ENCODE measurements at regions of chr4 and their contacts with region 1.

Region 1: GRCh38 chr4:10530137-10530786 is 73.0 kb upstream of the ZNF518B start:
- DNase-seq: no peak
- H3K4me3 ChIP-seq: no peak overlapping the region
- H3K27ac ChIP-seq: no peak overlapping the region
- H3K4me1 ChIP-seq: no peaks in the 10 kb centered on the region
- H3K27me3 ChIP-seq: no peaks in the 10 kb centered on the region; the same call in 1 of the 2 replicates

Region 2: DNA sequence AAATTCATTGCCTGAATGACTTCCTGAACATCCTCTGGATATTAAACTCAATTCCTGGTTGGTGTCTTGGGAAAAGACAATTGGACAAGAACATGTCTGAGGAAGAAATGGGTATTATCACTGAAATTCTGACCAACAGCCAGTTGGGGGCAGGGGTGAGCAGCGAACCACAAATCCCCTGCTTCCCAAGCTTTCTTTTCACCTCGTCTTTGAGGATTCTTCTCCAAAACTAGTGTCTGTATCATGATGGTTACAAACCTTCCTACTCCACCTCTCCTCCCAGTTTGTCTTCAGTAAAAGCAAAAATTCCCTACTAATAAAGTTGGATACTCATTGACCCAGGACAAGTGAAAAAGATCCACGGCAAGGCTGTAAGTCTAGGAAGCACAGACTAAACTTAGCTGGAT is 365.4 kb before region 1 on chr4:
- in situ Hi-C with region 1: loop called (anchors 10 kb)
- DNase-seq: peak; percentile 74
- H3K4me3 ChIP-seq: no peak overlapping the region
- H3K27ac ChIP-seq: no peak overlapping the region
- H3K4me1 ChIP-seq: 0 out of 2 replicates have a peak, but pooled peaks cover 8% of the 10 kb centered on the region
- H3K27me3 ChIP-seq: no peaks in the 10 kb centered on the region

Region 3: DNA sequence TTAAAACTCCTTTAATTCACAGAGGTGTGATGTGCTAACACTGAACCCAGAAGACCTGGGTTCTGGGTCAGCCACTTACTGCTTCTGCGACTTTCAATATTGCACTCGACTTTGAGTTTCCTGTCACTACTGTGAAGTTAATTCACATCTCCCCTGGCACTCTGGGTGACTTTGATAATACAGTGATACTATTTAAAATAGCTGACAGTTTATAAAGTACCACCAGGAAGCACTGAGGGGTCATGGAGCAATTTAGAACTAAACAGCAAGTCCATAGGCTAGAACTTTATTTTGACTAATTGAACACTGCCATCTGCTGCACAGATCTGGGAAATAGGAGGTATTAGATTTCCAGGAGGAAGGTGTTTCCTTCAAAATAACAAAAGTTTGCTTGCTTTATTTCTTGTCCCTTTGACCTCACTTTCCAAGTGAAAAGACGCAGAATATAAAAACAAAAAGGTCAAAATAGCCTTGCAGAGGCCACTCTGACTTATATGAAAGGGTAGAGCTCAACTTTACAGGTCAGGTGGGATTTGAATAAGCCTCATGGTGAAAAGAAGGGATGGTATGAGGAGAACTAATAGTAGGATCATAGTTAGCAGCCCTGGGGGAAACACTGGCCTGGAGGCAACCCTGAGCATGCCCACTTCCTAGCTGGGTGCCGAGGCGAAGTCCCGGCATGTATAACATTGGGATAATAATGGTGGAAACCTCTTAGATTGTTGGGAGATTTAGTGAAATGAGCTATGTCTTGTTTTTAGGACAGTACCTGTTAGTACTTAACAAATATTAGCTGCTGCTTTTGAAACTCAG is 126.4 kb before region 1 on chr4:
- in situ Hi-C with region 1: loop called (anchors 25 kb)
- DNase-seq: peak; percentile 66
- H3K4me3 ChIP-seq: no peak overlapping the region
- H3K27ac ChIP-seq: no peak overlapping the region
- H3K4me1 ChIP-seq: no peaks in the 10 kb centered on the region
- H3K27me3 ChIP-seq: no peaks in the 10 kb centered on the region

Region 4: DNA sequence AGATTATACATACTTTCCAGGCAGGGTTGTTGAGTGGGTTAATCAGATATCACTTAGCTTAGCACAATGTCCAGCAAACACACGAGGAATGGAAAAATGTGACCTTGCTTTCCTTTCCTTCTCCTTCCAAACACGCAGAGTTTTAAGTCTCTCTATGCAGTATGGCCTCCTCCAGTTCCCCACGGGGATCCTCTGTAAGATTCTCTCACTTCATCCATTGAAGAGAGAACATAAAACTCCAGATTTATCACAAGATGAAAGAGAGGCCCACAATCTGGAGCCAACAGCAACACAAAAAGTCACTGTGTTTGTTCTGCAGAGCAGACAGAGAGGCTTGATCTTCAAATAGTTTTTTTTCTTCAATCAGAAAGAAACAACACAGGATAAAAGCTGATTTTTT is 491.1 kb after region 1 on chr4:
- in situ Hi-C with region 1: no loop called
- DNase-seq: no peak
- H3K4me3 ChIP-seq: no peak overlapping the region
- H3K27ac ChIP-seq: no peak overlapping the region
- H3K4me1 ChIP-seq: no peaks in the 10 kb centered on the region
- H3K27me3 ChIP-seq: no peaks in the 10 kb centered on the region

Measured in GM23248 (cell line).